CD4-positive, alpha-beta memory T cell (primary cell): ENCODE measurements at regions of chr2 and their contacts with region 1.

Region 1: DNA sequence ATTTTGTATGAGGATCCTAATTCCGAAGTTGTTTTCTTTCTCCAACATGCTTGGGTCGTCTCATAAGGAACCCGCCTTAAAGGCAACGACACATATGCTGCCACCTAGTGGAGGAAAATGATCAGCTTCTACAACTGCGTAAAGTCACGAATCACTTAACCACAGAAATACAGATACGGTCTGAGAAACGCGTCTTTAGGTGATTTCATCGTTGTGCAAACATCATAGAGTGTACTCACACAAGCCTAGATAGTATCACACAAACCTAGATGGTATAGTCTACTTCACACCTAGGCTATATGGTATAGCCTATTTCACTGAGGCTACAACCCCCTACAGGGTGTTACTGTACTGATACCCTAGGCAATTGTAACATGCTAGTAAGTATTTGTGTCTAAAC is 13.1 kb downstream of the GNLY start:
- DNase-seq: peak; percentile 66 to 75 (median 72)
- H3K4me3 ChIP-seq: no peak overlapping the region
- H3K4me3 Mint-ChIP-seq: peak overlapping the region in 1 of 8 donors; percentile 1
- H3K27ac ChIP-seq: no peak overlapping the region
- H3K27ac Mint-ChIP-seq: peak overlapping the region in 3 of 7 donors; percentile 11 to 45 (median 17)
- H3K4me1 ChIP-seq: peaks cover 18% of the 10 kb centered on the region
- H3K4me1 Mint-ChIP-seq: peaks cover 10 to 39% (median 19%) of the 10 kb centered on the region in 4 donors
- H3K27me3 ChIP-seq: no peaks in the 10 kb centered on the region
- H3K27me3 Mint-ChIP-seq: peaks cover 3% of the 10 kb centered on the region in 2 donors

Region 2: DNA sequence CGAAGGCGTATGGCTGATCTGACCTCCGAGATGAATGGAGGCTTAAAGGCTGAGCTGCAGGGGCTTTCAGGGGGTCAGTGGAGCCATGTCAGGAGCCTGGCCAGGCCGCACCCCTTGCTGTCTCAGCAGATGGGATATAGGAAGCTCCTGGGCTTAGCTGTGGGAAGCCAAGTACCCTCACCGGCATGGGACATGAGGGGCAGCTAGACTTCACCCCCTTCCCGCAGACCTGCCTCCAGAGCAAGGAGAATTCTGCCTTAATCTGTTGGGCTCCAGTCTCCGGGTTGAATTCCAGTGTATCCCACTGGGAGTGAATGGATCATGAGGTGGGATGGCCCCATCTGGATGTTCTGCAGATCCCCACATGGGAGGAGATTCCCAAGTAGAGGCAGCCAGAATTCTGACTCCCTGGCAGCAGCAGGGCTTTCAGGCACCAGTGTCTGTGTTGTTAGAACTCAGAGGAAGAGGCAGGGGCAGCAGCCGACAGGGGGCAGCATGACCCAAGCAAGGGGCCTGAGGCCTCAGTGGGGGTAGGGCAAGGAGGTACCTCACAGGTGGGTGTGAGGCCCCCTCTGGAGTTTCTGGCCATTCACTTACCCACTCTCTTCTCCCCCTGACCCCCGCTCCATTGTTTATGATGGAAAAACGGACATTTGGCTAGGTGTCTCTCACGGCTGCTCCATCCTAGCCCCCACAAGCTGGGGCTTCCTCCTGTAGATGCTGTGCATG is 316.2 kb before region 1 on chr2:
- CTCF ChIA-PET with region 1: no interaction called
- POLR2A ChIA-PET with region 1: no interaction called
- intact Hi-C with region 1: loop called (anchors 1 kb)
- DNase-seq: peak; percentile 53 to 67 (median 60)
- H3K4me3 ChIP-seq: no peak overlapping the region
- H3K4me3 Mint-ChIP-seq: no peak overlapping the region
- H3K27ac ChIP-seq: no peak overlapping the region
- H3K27ac Mint-ChIP-seq: peak overlapping the region in 4 of 7 donors; percentile 13 to 86 (median 50)
- H3K4me1 ChIP-seq: peaks cover 15% of the 10 kb centered on the region
- H3K4me1 Mint-ChIP-seq: peaks cover 4 to 9% (median 6%) of the 10 kb centered on the region in 4 donors
- H3K27me3 ChIP-seq: no peaks in the 10 kb centered on the region
- H3K27me3 Mint-ChIP-seq: no peaks in the 10 kb centered on the region

Region 3: DNA sequence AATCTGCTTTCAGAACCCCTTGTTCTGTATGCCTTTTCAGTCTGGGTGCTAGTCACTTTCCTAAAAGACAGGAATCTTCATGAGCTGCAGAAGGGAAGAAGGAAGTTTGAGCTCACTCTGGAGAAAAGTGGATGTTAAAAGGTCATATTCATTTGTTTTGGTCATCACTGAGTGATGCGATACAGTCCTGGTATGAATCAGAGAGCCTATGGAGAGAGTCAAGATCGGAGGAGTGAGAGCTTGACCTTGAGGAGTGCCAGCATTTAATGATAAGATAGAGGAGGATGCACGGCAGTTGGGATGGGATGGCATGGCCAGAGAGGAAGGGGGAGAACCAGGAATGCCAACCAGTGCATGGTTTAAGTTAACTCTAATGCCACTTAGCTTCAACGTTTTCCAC is 71.7 kb before region 1 on chr2:
- CTCF ChIA-PET with region 1: interaction called, 67 read pairs
- POLR2A ChIA-PET with region 1: interaction called, 3 read pairs
- intact Hi-C with region 1: loop called (anchors 1 kb)
- DNase-seq: no peak
- H3K4me3 ChIP-seq: no peak overlapping the region
- H3K4me3 Mint-ChIP-seq: no peak overlapping the region
- H3K27ac ChIP-seq: no peak overlapping the region
- H3K27ac Mint-ChIP-seq: peak overlapping the region in 2 of 7 donors; percentile 18 to 36
- H3K4me1 ChIP-seq: no peaks in the 10 kb centered on the region
- H3K4me1 Mint-ChIP-seq: peaks cover 11 to 18% (median 14%) of the 10 kb centered on the region in 4 donors
- H3K27me3 ChIP-seq: no peaks in the 10 kb centered on the region
- H3K27me3 Mint-ChIP-seq: no peaks in the 10 kb centered on the region

Region 4: GRCh38 chr2:85642725-85643124 is 64.6 kb before region 1 on chr2:
- CTCF ChIA-PET with region 1: interaction called, 67 read pairs
- POLR2A ChIA-PET with region 1: interaction called, 3 read pairs
- intact Hi-C with region 1: loop called (anchors 1 kb)
- DNase-seq: peak in 1 of 5 donors; percentile 8
- H3K4me3 ChIP-seq: no peak overlapping the region
- H3K4me3 Mint-ChIP-seq: peak overlapping the region in 4 of 8 donors; percentile 2 to 52 (median 23)
- H3K27ac ChIP-seq: no peak overlapping the region
- H3K27ac Mint-ChIP-seq: peak overlapping the region; percentile 6 to 90 (median 57)
- H3K4me1 ChIP-seq: no peaks in the 10 kb centered on the region
- H3K4me1 Mint-ChIP-seq: peaks cover 6 to 13% (median 10%) of the 10 kb centered on the region in 4 donors
- H3K27me3 ChIP-seq: no peaks in the 10 kb centered on the region
- H3K27me3 Mint-ChIP-seq: no peaks in the 10 kb centered on the region

Region 5: GRCh38 chr2:85678794-85679672 is 28.3 kb before region 1 on chr2:
- CTCF ChIA-PET with region 1: interaction called, 57 read pairs
- POLR2A ChIA-PET with region 1: no interaction called
- intact Hi-C with region 1: loop called (anchors 1 kb)
- DNase-seq: peak; percentile 64 to 75 (median 68)
- H3K4me3 ChIP-seq: no peak overlapping the region
- H3K4me3 Mint-ChIP-seq: peak overlapping the region in 5 of 8 donors; percentile 20 to 52 (median 33)
- H3K27ac ChIP-seq: no peak overlapping the region
- H3K27ac Mint-ChIP-seq: no peak overlapping the region
- H3K4me1 ChIP-seq: peaks cover 4% of the 10 kb centered on the region
- H3K4me1 Mint-ChIP-seq: peaks cover 0 to 5% (median under 1%) of the 10 kb centered on the region in 4 donors
- H3K27me3 ChIP-seq: no peaks in the 10 kb centered on the region
- H3K27me3 Mint-ChIP-seq: peaks cover 0 to 2% of the 10 kb centered on the region in 2 donors

Region 6: DNA sequence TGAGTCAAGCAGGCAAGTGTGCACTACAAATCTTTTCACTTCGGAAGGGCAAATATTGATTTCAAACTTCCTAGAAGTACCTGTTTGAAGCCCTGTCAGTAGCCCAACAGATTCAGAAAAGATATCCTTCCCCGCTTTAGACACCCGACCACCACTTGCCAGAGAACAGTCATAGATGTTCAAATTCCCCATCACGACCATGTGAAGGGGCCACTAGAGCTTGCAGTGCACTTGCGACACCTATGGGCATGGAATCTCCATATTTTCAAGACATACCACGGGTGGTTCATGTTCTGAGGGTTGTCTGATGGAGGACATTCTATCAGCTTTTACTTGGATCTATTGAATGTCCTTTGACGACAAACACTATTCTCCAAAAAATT is 10.7 kb after region 1 on chr2:
- CTCF ChIA-PET with region 1: interaction called, 22 read pairs
- POLR2A ChIA-PET with region 1: no interaction called
- intact Hi-C with region 1: no loop called
- DNase-seq: no peak
- H3K4me3 ChIP-seq: no peak overlapping the region
- H3K4me3 Mint-ChIP-seq: no peak overlapping the region
- H3K27ac ChIP-seq: no peak overlapping the region
- H3K27ac Mint-ChIP-seq: no peak overlapping the region
- H3K4me1 ChIP-seq: peaks cover 5% of the 10 kb centered on the region
- H3K4me1 Mint-ChIP-seq: peaks cover 0 to 5% (median 5%) of the 10 kb centered on the region in 4 donors
- H3K27me3 ChIP-seq: peaks cover 3% of the 10 kb centered on the region
- H3K27me3 Mint-ChIP-seq: peaks cover 1 to 3% of the 10 kb centered on the region in 2 donors

Region 7: DNA sequence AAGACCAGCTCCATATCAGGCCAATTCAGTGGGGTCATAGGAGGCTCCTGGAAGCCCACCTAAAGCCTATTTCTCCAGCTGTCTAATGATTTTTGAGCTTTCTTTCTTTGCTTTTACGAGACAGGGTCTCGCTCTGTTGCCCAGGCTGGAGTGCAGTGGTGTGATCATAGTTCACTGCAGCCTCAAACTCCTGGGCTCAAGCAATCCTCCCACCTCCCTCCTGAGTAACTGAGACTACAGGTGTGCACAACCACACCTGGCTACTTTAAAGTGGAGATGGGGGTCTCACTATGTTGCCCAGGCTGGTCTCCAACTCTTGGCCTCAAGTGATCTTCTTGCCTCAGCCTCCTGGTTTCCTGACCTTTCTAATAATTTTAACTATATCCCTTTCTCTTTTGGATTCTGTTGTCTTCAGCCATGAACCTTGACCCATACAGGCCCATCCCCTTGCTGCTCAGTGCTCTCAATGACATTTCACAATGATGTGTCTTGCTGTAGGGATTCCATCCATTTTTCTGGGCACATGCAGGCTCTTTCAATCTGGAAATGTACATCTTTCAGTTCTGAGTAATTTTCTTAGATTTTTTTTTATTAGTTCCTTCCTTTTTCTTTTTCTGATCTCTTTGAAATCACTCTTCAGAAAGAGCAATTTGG is 16.5 kb after region 1 on chr2:
- CTCF ChIA-PET with region 1: interaction called, 22 read pairs
- POLR2A ChIA-PET with region 1: no interaction called
- intact Hi-C with region 1: no loop called
- DNase-seq: no peak
- H3K4me3 ChIP-seq: no peak overlapping the region
- H3K4me3 Mint-ChIP-seq: no peak overlapping the region
- H3K27ac ChIP-seq: no peak overlapping the region
- H3K27ac Mint-ChIP-seq: no peak overlapping the region
- H3K4me1 ChIP-seq: peaks cover 1% of the 10 kb centered on the region
- H3K4me1 Mint-ChIP-seq: peaks cover 0 to 2% (median 0%) of the 10 kb centered on the region in 4 donors
- H3K27me3 ChIP-seq: peaks cover 4% of the 10 kb centered on the region
- H3K27me3 Mint-ChIP-seq: peaks cover 0 to 9% of the 10 kb centered on the region in 2 donors

Region 8: DNA sequence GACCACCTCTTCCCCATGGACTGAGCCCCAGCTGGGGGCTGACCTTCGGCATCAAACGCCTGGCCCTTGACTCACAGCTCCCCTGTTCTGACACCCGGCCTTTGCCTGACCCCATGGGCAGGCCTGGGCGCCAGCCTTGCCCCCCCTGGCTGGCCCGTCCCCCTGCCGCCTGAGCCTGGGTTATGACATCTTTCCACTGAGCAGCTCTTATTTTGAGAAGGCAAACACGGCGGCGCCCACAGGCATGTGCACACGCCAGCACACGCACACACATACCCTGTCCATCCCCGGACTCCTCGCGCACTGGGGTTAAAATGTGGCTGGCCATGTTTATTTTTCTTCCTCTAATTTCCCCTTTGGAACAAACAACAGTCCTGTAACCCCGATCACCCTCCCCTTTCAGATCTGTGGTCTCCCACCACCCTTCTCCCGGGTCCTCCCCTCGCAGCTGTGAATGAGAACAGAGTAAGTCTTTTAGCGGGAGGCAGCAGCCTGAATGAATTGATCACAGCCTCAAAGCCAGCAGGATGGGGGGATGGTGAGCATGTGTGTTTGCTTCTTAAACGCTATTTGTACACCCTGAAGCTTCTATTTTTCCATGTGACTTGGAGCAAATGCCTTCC is 34.6 kb after region 1 on chr2:
- CTCF ChIA-PET with region 1: no interaction called
- POLR2A ChIA-PET with region 1: no interaction called
- intact Hi-C with region 1: no loop called
- DNase-seq: no peak
- H3K4me3 ChIP-seq: no peak overlapping the region
- H3K4me3 Mint-ChIP-seq: no peak overlapping the region
- H3K27ac ChIP-seq: no peak overlapping the region
- H3K27ac Mint-ChIP-seq: no peak overlapping the region
- H3K4me1 ChIP-seq: no peaks in the 10 kb centered on the region
- H3K4me1 Mint-ChIP-seq: no peaks in the 10 kb centered on the region
- H3K27me3 ChIP-seq: peaks cover 11% of the 10 kb centered on the region
- H3K27me3 Mint-ChIP-seq: peaks cover 25 to 59% of the 10 kb centered on the region in 2 donors